Heart right ventricle (tissue), 16 donors: ENCODE measurements at regions of chrX and their contacts with region 1.

Region 1: GRCh38 chrX:66200855-66201795 is 37.1 kb downstream of the HEPH start:
- DNase-seq: no peak
- ATAC-seq: no peak
- H3K4me3 ChIP-seq: no peak overlapping the region
- H3K27ac ChIP-seq: no peak overlapping the region
- H3K4me1 ChIP-seq: no peaks in the 10 kb centered on the region
- H3K27me3 ChIP-seq: peaks cover 0 to 57% (median 0%) of the 10 kb centered on the region in 7 donors
- CTCF ChIP-seq: peak in 7 of 9 donors; percentile 18 to 48 (median 38)

Region 2: GRCh38 chrX:64925480-64925879 is 1275.6 kb before region 1 on chrX:
- intact Hi-C with region 1: no loop called
- DNase-seq: no peak
- ATAC-seq: no peak
- H3K4me3 ChIP-seq: no peak overlapping the region
- H3K27ac ChIP-seq: no peak overlapping the region
- H3K4me1 ChIP-seq: no peaks in the 10 kb centered on the region
- H3K27me3 ChIP-seq: no peaks in the 10 kb centered on the region
- CTCF ChIP-seq: no peak

Region 3: DNA sequence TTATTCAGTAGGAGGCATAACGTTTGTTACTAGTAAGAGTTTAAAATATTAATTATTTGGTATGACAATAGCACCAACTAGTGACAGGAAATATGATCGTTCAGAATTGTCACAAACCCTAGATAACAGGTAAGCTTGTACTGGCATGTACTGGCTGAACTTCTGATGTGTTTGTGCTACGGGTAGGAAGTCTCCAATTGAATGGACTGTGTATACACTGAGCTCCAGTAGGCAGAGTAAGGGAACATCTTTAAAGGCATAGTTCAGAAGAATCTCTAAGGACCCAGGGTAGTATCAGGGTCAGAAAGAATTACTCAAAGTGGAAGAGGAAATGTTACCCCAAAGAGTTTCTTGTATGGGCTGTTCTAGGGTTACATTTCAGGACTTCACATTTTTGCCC is 207.4 kb after region 1 on chrX:
- intact Hi-C with region 1: no loop called
- DNase-seq: no peak
- ATAC-seq: no peak
- H3K4me3 ChIP-seq: no peak overlapping the region
- H3K27ac ChIP-seq: no peak overlapping the region
- H3K4me1 ChIP-seq: no peaks in the 10 kb centered on the region
- H3K27me3 ChIP-seq: peaks cover 0 to 24% (median 0%) of the 10 kb centered on the region in 7 donors
- CTCF ChIP-seq: peak in 1 of 9 donors; percentile 21

Region 4: DNA sequence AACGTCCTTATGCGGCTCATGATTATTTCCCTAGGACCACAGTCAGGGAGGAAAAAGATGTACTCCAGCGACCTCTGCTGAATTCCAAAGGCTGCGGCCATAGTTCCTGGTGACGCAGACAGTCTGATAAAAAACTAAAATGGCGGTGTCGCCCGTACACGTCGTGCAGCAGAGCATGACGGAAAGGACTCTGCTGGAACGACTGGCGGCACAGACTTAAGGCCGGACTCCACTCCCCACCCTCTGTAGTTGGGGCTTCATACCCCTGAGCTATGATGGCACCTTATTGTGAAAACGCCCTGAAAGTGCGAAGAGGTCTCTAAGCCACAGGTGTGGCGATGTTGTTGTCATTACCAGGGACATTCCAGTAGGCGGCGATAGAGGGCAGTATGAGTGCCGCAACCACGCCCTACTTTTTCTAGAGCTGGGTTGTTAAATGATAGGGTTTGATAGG is 527.7 kb after region 1 on chrX:
- intact Hi-C with region 1: loop called in 5 of 10 experiments (anchors 5 to 10 kb)
- DNase-seq: peak; percentile 13 to 16
- ATAC-seq: peak in 7 of 8 donors; percentile 58 to 84 (median 63)
- H3K4me3 ChIP-seq: peak overlapping the region in 9 of 10 donors; percentile 21 to 51 (median 46)
- H3K27ac ChIP-seq: no peak overlapping the region
- H3K4me1 ChIP-seq: no peaks in the 10 kb centered on the region
- H3K27me3 ChIP-seq: peaks cover 0 to 3% (median 0%) of the 10 kb centered on the region in 7 donors
- CTCF ChIP-seq: peak; percentile 22 to 65 (median 52)

Region 5: DNA sequence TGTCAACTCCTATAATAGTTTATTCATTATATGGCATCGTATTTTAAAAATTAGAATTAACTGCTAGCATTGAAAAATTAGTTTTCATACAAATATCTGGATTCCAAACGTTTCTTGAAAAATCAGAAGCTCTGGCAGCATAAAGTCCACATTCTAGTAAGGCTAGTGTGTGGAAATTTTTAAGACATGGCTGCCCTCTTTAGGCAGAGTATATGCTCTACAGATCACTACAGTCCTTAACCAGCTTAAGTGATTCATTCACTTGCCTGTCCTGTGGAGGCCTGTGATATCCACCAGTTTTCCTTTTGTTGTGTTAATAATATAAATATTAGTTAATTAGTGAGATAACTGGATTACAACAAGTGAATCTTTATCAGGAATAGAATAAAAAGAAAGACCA is 1944.9 kb after region 1 on chrX:
- intact Hi-C with region 1: loop called in 1 of 10 experiments (anchors 10 kb)
- DNase-seq: no peak
- ATAC-seq: peak in 1 of 8 donors; percentile 72
- H3K4me3 ChIP-seq: no peak overlapping the region
- H3K27ac ChIP-seq: no peak overlapping the region
- H3K4me1 ChIP-seq: no peaks in the 10 kb centered on the region
- H3K27me3 ChIP-seq: peaks cover 0 to 27% (median 0%) of the 10 kb centered on the region in 7 donors
- CTCF ChIP-seq: peak in 7 of 9 donors; percentile 30 to 50 (median 45)